ENCODE measurements at regions of chrX and their contacts with region 1.

Region 1: DNA sequence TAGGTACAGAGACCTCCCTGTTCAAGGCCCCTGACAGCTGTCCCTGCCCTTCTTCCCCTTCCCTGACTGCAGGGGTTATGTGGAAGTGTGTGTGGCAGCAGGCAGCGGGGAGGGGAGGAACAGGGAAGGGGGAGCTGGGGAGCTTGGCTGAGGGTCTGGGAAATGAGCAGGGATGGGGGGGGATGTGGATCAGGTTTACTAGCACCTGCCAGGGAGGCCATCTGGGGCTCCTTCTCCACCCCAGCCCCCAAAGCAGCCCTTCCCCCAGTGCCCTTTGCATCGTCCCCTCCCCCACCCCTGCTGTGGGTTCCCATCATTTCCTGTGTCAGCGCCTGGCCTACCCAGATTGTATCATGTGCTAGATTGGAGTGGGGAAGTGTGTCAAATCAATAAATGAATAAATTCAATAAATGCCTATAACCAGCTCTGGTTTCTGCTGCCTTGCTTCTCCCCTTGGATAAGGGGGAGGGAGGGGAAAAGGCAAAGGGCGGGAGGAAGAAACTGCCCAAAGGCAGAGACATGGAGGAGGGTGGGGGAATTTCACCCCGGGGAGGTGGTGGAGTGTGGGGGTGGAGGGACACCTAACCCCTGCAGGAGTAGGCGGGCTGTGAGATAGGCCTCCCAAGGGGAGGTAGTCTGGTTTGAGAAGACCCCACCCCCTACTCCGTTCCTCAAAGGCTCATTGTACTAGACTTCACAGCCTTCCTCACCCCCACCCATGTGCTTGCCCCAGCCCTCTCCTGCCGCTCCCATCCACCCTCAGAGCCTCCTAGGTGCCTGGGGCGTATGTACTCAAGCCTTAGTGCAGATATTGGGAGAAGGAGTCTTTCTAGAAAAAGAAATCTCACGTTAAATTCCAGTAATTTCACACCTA is 3.2 kb downstream of the CXorf65 start:
- DNase-seq: peak in 7 of 9 experiments; percentile 51 to 83 (median 69)
- ATAC-seq: peak; percentile 41
- H3K4me3 ChIP-seq: peak overlapping the region; percentile 23 to 31
- H3K4me3 Mint-ChIP-seq: peak overlapping the region; percentile 80
- H3K27ac ChIP-seq: peak overlapping the region; percentile 62 to 100
- H3K27ac Mint-ChIP-seq: peak overlapping the region; percentile 96
- H3K4me1 ChIP-seq: peaks cover 85% of the 10 kb centered on the region
- H3K4me1 Mint-ChIP-seq: peaks cover 83% of the 10 kb centered on the region
- H3K27me3 ChIP-seq: no peaks in the 10 kb centered on the region
- H3K27me3 Mint-ChIP-seq: no peaks in the 10 kb centered on the region
- CTCF ChIP-seq: no peak

Region 2: DNA sequence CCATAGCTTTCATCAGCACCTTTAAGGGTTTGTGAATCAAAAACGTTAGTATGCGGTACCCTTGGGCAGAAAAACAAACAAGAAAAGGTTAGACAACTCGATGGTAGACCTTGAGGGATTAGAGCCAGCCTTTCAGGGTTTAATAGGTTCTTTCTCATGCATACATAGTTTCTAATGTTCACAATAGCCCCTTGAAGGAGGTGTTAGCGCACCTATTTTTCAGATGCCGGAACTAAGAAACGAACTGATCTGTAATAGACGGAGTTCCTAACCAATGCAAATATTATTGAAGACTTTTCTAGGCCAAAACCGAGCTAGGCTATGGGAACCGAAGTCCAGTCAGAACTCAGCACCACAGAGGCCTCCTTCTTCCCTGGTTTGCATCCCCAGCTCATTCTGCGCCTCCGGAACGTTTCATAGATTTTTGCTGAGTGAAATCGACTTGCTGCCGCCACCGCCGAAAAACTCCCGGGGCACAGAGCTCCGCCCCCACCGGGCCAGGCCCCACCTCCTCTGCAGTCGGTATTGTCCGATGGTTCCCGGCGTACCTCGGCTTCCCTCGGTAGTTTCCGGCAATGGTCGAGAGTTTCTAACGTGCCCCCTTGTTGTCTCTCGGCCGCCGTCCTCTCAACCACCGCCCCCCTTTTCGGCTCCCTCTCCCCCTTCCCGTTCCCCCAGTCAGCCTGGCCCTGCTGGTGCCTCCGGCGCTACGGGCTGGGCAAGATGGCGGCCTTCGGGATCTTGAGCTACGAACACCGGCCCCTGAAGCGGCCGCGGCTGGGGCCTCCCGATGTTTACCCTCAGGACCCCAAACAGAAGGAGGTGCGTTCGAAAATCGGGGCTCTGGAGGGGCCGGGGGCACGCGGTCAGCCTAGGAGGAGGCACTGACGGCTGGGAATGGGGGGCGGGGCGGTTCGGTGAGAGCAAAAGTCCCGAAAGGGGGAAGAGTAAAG is 15.0 kb after region 1 on chrX and contains the start of gene MED12:
- CTCF ChIA-PET with region 1: interaction called, 16 read pairs
- POLR2A ChIA-PET with region 1: interaction called, 60 read pairs
- intact Hi-C with region 1: loop called (anchors 1 to 2 kb)
- DNase-seq: peak; percentile 56 to 90 (median 83)
- ATAC-seq: peak; percentile 97
- H3K4me3 ChIP-seq: peak within 1 kb of the TSS; percentile 68 to 73
- H3K4me3 Mint-ChIP-seq: peak within 1 kb of the TSS; percentile 87
- H3K27ac ChIP-seq: peak within 1 kb of the TSS; percentile 78 to 82
- H3K27ac Mint-ChIP-seq: peak within 1 kb of the TSS; percentile 94
- H3K4me1 ChIP-seq: peaks cover 27% of the 10 kb centered on the region
- H3K4me1 Mint-ChIP-seq: peaks cover 36% of the 10 kb centered on the region
- H3K27me3 ChIP-seq: no peaks in the 10 kb centered on the region
- H3K27me3 Mint-ChIP-seq: no peaks in the 10 kb centered on the region
- CTCF ChIP-seq: no peak
- total RNA-seq, gene MED12: 54.5 to 57.4 TPM

Region 3: GRCh38 chrX:71239781-71240180 is 136.4 kb after region 1 on chrX:
- CTCF ChIA-PET with region 1: no interaction called
- POLR2A ChIA-PET with region 1: no interaction called
- intact Hi-C with region 1: no loop called
- DNase-seq: no peak
- ATAC-seq: no peak
- H3K4me3 ChIP-seq: no peak overlapping the region
- H3K4me3 Mint-ChIP-seq: no peak overlapping the region
- H3K27ac ChIP-seq: no peak overlapping the region
- H3K27ac Mint-ChIP-seq: no peak overlapping the region
- H3K4me1 ChIP-seq: no peaks in the 10 kb centered on the region
- H3K4me1 Mint-ChIP-seq: no peaks in the 10 kb centered on the region
- H3K27me3 ChIP-seq: no peaks in the 10 kb centered on the region
- H3K27me3 Mint-ChIP-seq: no peaks in the 10 kb centered on the region
- CTCF ChIP-seq: no peak

Measured in CD8-positive, alpha-beta T cell (primary cell).